Endothelial cell of umbilical vein (primary cell): ENCODE measurements at regions of chrX and their contacts with region 1.

Region 1: GRCh38 chrX:153927922-153928760 is 2.1 kb upstream of the ARHGAP4 start:
- DNase-seq: peak; percentile 98
- H3K4me3 ChIP-seq: peak overlapping the region in 2 of 3 experiments; percentile 44 to 49
- H3K27ac ChIP-seq: peak overlapping the region; percentile 100
- H3K4me1 ChIP-seq: peaks cover 44% of the 10 kb centered on the region
- H3K27me3 ChIP-seq: no peaks in the 10 kb centered on the region
- CTCF ChIP-seq: no peak
- POLR2A ChIP-seq: no peak

Region 2: DNA sequence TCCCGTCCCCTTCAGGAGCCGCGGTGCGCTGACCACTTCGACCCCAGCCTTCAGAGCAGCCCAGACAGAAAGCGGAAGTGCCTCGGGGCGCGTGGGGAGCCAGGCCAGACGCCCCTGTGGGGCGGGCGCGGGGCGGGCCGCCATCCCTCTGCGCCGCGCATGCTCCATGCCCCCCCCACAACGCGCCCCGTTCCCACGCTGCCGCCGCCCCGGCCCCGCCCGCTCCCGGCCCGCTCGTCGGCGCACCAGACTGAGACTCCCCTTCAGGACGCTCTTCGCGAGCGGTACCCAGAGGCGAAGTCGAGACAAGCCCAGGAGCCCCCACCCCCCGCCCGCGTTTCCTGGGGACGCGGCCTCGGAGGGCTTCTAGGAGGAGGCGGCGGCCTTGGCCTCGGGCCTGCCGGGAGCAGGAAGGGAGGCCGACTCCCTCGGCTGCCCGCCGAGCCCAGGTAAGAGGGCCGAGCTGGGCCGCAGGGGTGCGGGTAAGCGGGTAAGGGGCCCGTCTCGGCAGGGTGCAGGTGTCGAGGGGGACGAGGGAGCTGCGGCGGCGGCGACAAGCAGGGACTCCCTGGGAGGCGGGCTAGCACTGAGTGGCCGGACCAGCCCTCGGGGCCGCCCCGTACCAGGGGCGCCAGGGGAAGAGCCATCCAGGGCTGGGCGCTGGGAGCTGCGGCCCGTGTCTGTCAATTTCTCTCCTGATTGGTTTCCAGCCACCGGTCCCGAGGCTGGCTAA is 516.7 kb before region 1 on chrX and contains the start of gene ZFP92:
- CTCF ChIA-PET with region 1: no interaction called
- POLR2A ChIA-PET with region 1: no interaction called
- dilution Hi-C with region 1: no loop called
- intact Hi-C with region 1: no loop called
- DNase-seq: peak; percentile 1
- H3K4me3 ChIP-seq: peak within 1 kb of the TSS; percentile 36 to 43 (median 37)
- H3K27ac ChIP-seq: no peak within 1 kb of the TSS
- H3K4me1 ChIP-seq: peaks cover 6% of the 10 kb centered on the region
- H3K27me3 ChIP-seq: no peaks in the 10 kb centered on the region
- CTCF ChIP-seq: no peak
- POLR2A ChIP-seq: no peak
- total RNA-seq, gene ZFP92: 1.2 TPM in 2 replicates

Region 3: GRCh38 chrX:153649178-153649914 is 278.8 kb before region 1 on chrX:
- CTCF ChIA-PET with region 1: no interaction called
- POLR2A ChIA-PET with region 1: no interaction called
- dilution Hi-C with region 1: no loop called
- intact Hi-C with region 1: no loop called
- DNase-seq: no peak
- H3K4me3 ChIP-seq: no peak overlapping the region
- H3K27ac ChIP-seq: no peak overlapping the region
- H3K4me1 ChIP-seq: no peaks in the 10 kb centered on the region
- H3K27me3 ChIP-seq: peaks cover 34 to 38% of the 10 kb centered on the region in 2 experiments
- CTCF ChIP-seq: peak; percentile 19 to 51
- POLR2A ChIP-seq: no peak

Region 4: DNA sequence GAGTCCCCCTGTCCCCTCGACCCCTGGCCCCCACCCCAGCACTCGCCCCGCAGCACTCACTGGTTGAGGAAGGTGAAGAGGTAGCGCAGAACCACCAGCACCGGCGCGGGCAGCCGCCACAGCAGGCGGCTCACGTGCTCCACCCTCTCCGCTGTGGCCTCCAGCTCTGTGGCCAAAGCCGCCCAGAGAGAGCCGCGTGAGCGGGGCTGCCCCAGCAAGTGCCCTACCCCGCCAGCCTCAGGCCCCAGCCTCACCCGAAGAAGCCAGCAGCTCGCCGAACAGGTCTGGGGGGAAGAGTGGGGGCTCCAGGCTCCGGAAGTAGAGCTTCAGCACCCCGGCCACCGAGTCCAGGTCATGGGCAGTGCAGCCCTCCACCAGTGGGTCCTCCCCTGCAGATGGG is 17.7 kb before region 1 on chrX:
- CTCF ChIA-PET with region 1: interaction called, 10 read pairs
- POLR2A ChIA-PET with region 1: no interaction called
- dilution Hi-C with region 1: no loop called
- intact Hi-C with region 1: no loop called
- DNase-seq: no peak
- H3K4me3 ChIP-seq: no peak overlapping the region
- H3K27ac ChIP-seq: no peak overlapping the region
- H3K4me1 ChIP-seq: no peaks in the 10 kb centered on the region
- H3K27me3 ChIP-seq: no peaks in the 10 kb centered on the region
- CTCF ChIP-seq: no peak
- POLR2A ChIP-seq: no peak

Region 5: GRCh38 chrX:154308108-154308946 is 380.2 kb after region 1 on chrX:
- CTCF ChIA-PET with region 1: no interaction called
- POLR2A ChIA-PET with region 1: no interaction called
- dilution Hi-C with region 1: no loop called
- intact Hi-C with region 1: no loop called
- DNase-seq: peak; percentile 53
- H3K4me3 ChIP-seq: no peak overlapping the region
- H3K27ac ChIP-seq: no peak overlapping the region
- H3K4me1 ChIP-seq: no peaks in the 10 kb centered on the region
- H3K27me3 ChIP-seq: no peaks in the 10 kb centered on the region
- CTCF ChIP-seq: peak; percentile 59 to 68
- POLR2A ChIP-seq: no peak